ENCODE measurements at regions of chr6 and their contacts with region 1.

Region 1: GRCh38 chr6:137210903-137211302 is 8.3 kb downstream of the IFNGR1 start:
- H3K4me3 Mint-ChIP-seq: no peak overlapping the region
- H3K27ac Mint-ChIP-seq: no peak overlapping the region
- H3K4me1 Mint-ChIP-seq: peaks cover 79% of the 10 kb centered on the region
- H3K27me3 Mint-ChIP-seq: no peaks in the 10 kb centered on the region

Region 2: DNA sequence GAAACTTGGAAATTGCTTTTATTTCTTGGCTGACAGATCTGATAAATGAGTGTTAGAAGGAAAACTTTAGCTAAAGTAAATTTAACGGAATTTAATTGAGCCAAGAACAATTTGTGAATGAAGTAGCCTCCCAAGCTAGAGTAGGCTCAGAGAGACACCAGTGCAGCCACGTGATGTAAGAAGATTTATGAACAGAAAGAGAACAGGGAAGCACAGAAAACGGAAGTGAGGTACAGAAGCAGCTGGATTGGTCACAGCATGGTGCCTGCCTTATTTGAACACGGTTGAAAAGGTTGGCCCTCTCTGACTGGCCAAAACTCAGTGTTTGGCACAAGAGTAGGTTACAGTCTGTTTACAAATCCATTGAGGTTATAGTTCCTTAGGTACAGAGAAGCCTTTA is 37.8 kb after region 1 on chr6:
- intact Hi-C with region 1: loop called (anchors 5 kb)
- H3K4me3 Mint-ChIP-seq: no peak overlapping the region
- H3K27ac Mint-ChIP-seq: peak overlapping the region; percentile 58
- H3K4me1 Mint-ChIP-seq: peaks cover 66% of the 10 kb centered on the region
- H3K27me3 Mint-ChIP-seq: no peaks in the 10 kb centered on the region